Sigmoid colon (tissue), 7 donors: ENCODE measurements at regions of chr10 and their contacts with region 1.

Region 1: GRCh38 chr10:110007701-110008517 is at the start of gene ADD3:
- DNase-seq: peak; percentile 98
- H3K4me3 ChIP-seq: peak within 1 kb of the TSS; percentile 83 to 98 (median 92)
- H3K27ac ChIP-seq: peak within 1 kb of the TSS; percentile 90 to 95 (median 91)
- H3K4me1 ChIP-seq: peaks cover 0 to 55% (median 32%) of the 10 kb centered on the region in 4 donors
- H3K27me3 ChIP-seq: no peaks in the 10 kb centered on the region
- CTCF ChIP-seq: no peak
- EP300 ChIP-seq: no peak
- POLR2A ChIP-seq: peak in 1 of 2 donors; percentile 45
- total RNA-seq, gene ADD3: 29.6 to 145 (median 98.3) TPM

Region 2: DNA sequence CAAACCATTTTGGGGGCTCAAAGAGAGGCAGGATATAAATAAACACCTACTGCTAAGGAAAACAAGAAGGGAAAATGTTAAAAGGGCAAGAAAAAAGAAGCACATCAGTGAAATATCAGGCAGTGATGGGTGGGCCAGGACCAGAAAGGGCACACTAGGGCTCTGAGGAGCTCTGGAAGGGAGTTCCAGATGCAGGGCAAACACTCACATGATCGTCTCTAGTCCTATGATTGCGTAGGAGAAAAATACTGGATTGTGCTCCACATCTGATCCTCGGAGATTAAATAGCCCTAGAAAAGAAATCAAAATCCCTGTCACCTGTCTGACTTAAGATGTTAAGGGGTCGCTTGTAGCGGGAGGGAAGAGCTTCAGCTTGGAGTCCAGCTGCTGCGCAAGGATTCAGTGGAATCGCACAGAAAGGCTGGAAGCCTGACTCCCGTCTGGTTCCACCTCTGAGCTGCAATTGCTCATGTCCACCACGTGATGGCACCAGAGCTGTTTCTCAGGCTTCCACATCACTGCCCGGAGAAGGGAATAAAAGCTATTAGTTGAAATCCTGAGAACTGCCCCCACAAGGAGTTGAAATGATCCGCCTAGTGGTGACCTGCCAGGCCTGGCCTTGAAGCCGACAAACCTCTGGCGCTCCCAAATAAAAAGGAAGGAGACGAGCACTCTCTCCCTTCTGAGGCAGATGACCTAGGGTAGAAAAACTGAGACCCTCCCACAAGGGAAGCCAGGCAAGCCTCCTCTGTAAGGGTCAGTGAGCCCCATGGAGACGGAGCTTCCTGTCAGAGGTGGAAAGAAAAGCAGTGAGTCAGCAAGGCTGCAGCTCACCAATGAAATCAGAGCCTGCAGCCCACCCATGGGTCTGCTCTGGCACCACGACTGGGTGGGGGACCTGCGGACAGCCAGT is 123.8 kb before region 1 on chr10:
- intact Hi-C with region 1: loop called (anchors 2 kb)
- DNase-seq: peak; percentile 89
- H3K4me3 ChIP-seq: peak overlapping the region in 2 of 4 donors; percentile 1 to 10
- H3K27ac ChIP-seq: peak overlapping the region; percentile 23 to 55 (median 52)
- H3K4me1 ChIP-seq: peaks cover 0 to 12% (median 8%) of the 10 kb centered on the region in 4 donors
- H3K27me3 ChIP-seq: no peaks in the 10 kb centered on the region
- CTCF ChIP-seq: peak; percentile 80 to 96 (median 93)
- EP300 ChIP-seq: no peak
- POLR2A ChIP-seq: no peak

Region 3: DNA sequence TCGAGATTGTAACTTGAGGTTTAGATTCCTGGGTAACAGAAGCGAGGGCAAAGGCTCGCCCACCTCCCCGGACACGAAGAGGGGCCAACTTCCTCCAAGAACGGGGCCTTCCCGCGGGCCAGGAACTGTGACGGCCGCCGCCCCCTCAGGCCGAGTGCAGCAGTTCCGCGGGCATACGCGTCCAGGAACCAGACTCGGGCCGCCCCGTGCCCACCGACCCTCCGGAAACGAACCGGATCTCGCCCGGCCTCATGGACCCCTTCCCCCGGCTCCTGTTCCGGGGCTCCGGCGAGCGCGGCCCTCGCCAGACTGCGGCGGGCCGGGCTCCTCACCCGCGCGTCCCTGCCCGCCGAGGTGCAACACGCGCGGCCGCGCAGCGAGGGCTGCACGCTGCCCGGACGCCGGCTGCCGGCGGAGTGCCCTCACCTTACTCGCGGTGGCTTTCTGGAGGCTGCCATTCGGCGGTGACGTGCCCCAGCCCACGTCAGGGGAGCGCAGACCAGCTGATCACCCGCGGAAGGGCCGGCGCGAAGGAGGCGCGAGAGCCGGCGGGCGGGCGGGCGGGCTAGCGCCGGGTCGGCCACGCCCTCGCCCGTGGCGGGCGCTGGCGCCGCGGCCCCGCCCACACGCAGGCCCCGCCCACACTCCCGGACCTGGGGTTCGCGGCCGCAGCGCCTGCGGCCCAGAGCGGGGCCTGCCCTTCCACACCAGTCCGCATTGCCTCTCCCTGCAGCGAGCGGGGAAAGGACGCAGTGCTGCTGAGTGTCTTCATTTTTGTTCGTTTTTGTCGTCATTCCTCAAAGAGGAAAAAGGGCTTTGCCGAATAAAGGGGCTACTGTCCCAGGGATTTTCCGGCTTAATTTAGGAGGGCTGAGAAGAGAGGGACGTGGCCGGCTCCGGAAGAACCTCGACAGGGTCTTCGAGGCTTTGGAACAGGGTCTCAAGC is 84.7 kb before region 1 on chr10 and contains the start of gene XPNPEP1:
- intact Hi-C with region 1: loop called (anchors 1 kb)
- DNase-seq: peak; percentile 95
- H3K4me3 ChIP-seq: peak within 1 kb of the TSS; percentile 44 to 98 (median 93)
- H3K27ac ChIP-seq: peak within 1 kb of the TSS; percentile 86 to 97 (median 92)
- H3K4me1 ChIP-seq: peaks cover 0 to 28% (median 19%) of the 10 kb centered on the region in 4 donors
- H3K27me3 ChIP-seq: no peaks in the 10 kb centered on the region
- CTCF ChIP-seq: no peak
- EP300 ChIP-seq: no peak
- POLR2A ChIP-seq: peak; percentile 16 to 61
- total RNA-seq, gene XPNPEP1: 53.5 to 59.1 (median 56.5) TPM

Region 4: DNA sequence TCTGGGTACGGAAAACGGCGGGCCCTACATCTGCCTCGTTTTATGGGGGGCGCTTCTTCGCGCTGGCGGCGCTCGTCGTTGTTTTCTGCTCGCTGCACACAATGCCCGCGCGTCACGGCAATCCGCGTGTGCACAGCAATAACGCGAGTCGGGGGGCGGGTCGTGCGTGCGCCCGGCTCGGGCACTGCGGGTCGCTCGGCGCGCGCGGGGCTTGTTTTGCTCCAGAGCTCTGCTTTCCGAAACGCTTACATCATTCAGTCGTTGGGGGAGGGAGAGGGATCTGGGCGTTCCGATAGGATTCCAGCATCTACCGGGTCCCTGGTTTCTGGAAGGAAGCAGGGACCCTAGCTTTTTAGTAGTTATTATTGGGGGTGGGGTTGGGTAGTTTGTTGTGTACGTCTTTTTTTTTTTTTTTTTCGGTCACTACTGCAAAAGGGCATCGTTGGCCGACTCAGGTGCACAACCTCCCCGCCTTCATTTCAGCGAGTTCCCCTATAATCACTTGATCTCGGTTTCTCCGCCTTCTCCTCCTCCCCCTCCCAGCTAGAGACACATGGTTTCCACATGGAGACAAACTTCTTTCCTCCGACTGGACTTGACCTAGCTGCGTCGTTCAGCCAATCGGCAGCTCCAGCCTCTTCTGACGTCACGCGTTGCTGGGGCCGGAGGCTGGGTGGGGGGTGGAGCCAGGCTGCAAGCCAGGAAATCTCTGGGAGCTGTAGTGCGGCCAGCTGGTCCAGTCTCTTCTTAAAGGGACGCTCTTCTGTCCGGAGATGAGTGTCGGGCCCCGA is 203.0 kb after region 1 on chr10:
- intact Hi-C with region 1: loop called (anchors 5 kb)
- DNase-seq: peak; percentile 99
- H3K4me3 ChIP-seq: peak overlapping the region; percentile 62 to 92 (median 76)
- H3K27ac ChIP-seq: peak overlapping the region; percentile 94 to 100 (median 98)
- H3K4me1 ChIP-seq: peaks cover 0 to 45% (median 35%) of the 10 kb centered on the region in 4 donors
- H3K27me3 ChIP-seq: no peaks in the 10 kb centered on the region
- CTCF ChIP-seq: no peak
- EP300 ChIP-seq: peak in 2 of 4 donors; percentile 39 to 75
- POLR2A ChIP-seq: peak; percentile 73 to 85

Region 5: DNA sequence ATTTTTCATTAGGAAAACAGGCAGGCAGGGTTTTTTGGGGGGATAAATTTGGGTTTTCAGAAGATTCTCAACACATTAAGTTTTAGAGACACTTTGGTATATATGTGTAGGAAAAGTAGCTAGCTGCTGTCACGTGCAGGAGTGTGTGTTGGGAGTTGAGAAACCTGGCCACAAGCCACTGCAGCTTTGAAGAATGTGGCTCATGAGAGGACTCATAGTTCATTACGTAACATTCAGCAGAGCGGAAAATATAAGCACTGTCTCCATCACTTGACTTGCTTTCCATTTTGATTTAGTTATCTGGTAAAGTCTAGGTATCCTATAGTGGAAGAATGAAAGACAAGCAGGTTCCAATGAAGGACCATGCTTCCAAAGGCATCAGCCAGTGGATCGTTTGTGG is 265.6 kb after region 1 on chr10:
- intact Hi-C with region 1: loop called (anchors 5 kb)
- DNase-seq: peak; percentile 95
- H3K4me3 ChIP-seq: no peak overlapping the region
- H3K27ac ChIP-seq: peak overlapping the region; percentile 58 to 77 (median 75)
- H3K4me1 ChIP-seq: peaks cover 0 to 70% (median 50%) of the 10 kb centered on the region in 4 donors
- H3K27me3 ChIP-seq: no peaks in the 10 kb centered on the region
- CTCF ChIP-seq: no peak
- EP300 ChIP-seq: peak in 2 of 4 donors; percentile 22 to 67
- POLR2A ChIP-seq: no peak

Region 6: GRCh38 chr10:110820321-110820814 is 812.5 kb after region 1 on chr10:
- intact Hi-C with region 1: no loop called
- DNase-seq: peak; percentile 95
- H3K4me3 ChIP-seq: no peak overlapping the region
- H3K27ac ChIP-seq: peak overlapping the region; percentile 79 to 90 (median 85)
- H3K4me1 ChIP-seq: peaks cover 0 to 84% (median 81%) of the 10 kb centered on the region in 4 donors
- H3K27me3 ChIP-seq: no peaks in the 10 kb centered on the region
- CTCF ChIP-seq: no peak
- EP300 ChIP-seq: peak; percentile 15 to 81 (median 50)
- POLR2A ChIP-seq: no peak

Region 7: GRCh38 chr10:110947061-110947595 is 939.2 kb after region 1 on chr10:
- intact Hi-C with region 1: no loop called
- DNase-seq: no peak
- H3K4me3 ChIP-seq: no peak overlapping the region
- H3K27ac ChIP-seq: no peak overlapping the region
- H3K4me1 ChIP-seq: peaks cover 0 to 47% (median 33%) of the 10 kb centered on the region in 4 donors
- H3K27me3 ChIP-seq: no peaks in the 10 kb centered on the region
- CTCF ChIP-seq: no peak
- EP300 ChIP-seq: no peak
- POLR2A ChIP-seq: no peak